ENCODE measurements at regions of chr22 and their contacts with region 1.

Region 1: GRCh38 chr22:36065775-36066559 is 37.3 kb upstream of the RBFOX2 start:
- DNase-seq: peak; percentile 91

Region 2: DNA sequence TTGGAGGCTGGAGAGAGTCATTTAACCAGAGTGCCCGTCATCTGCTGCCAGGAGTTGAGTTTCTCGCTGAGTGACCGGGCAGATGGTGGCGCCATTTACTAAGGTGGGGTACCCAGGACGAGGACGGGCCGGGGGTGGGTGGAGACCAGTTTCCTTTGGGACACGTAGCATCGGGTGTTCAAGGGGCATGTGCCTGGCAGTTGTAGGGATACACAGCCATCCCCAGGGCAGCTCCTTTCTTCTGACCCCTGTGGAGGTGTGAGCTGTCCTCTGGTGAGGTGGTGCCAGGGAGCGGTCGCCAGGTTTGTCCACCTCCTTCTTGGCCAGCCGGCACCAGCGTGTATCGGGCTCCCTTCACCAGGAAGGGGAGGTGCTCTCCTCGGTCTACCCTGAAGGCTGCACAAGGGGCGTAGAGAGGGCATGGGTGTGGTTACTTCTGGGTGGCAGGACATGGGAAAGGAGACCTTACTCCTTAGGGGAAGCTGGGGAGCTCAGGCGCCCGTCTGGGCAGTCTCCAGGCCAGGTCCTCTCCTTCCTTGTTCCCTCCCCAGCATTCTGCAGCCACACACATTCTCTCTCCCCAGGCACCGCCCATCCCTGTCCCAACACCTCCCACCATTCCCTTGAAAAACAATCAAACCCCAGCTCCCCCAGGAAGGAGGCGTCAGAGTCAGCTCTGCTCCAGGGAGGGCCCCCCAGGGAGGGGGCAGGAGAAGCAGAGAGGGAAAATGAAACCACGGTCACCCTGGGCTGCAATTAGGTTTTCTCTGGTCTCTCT is 438.5 kb before region 1 on chr22:
- intact Hi-C with region 1: loop called (anchors 5 kb)
- DNase-seq: peak; percentile 90

Region 3: GRCh38 chr22:35930933-35931332 is 135.0 kb before region 1 on chr22:
- intact Hi-C with region 1: loop called (anchors 1 kb)
- DNase-seq: no peak

Region 4: DNA sequence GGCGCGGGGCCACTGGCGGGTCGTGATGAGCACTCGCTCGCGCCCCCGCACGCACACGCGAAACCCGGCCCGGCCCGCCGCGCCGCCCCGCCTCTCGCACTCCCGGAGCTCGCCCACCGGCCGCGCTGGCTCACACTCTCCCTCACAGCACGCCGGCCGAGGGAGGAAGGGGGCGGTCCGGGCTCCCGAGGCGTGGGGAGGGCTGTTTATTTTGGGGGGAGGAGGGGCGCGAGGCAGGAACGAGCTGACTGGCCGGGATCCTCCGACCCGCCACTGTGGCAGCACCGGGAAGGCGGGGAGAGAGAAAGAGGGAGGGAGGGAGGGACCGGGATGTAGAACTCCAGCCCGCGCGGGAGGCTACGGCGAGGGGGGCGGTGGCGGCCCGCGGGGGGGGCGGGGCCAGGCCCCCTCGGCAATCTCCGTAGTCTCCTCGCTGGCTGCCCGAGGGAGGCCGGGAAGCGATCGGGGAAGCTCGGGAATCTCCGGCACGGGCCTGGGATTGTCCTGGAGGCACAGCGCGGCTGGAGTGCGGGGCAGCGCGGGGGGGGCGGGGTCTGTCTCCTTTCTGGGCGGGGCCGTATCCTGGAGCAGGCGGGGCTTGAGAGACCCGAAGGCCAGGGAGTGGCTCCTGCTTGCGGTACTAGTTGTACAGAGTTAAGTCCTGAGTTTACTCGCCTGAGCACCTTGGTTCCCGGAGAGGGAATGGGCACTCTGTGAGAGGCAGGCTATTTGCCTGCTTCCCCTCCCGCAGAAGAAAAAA is 37.1 kb before region 1 on chr22 and contains the start of gene RBFOX2:
- intact Hi-C with region 1: loop called (anchors 2 kb)
- DNase-seq: peak; percentile 96
- total RNA-seq, gene RBFOX2: 102 TPM